Right ventricle myocardium superior (tissue), 1 donor: ENCODE measurements at regions of chr15 and their contacts with region 1.

Region 1: DNA sequence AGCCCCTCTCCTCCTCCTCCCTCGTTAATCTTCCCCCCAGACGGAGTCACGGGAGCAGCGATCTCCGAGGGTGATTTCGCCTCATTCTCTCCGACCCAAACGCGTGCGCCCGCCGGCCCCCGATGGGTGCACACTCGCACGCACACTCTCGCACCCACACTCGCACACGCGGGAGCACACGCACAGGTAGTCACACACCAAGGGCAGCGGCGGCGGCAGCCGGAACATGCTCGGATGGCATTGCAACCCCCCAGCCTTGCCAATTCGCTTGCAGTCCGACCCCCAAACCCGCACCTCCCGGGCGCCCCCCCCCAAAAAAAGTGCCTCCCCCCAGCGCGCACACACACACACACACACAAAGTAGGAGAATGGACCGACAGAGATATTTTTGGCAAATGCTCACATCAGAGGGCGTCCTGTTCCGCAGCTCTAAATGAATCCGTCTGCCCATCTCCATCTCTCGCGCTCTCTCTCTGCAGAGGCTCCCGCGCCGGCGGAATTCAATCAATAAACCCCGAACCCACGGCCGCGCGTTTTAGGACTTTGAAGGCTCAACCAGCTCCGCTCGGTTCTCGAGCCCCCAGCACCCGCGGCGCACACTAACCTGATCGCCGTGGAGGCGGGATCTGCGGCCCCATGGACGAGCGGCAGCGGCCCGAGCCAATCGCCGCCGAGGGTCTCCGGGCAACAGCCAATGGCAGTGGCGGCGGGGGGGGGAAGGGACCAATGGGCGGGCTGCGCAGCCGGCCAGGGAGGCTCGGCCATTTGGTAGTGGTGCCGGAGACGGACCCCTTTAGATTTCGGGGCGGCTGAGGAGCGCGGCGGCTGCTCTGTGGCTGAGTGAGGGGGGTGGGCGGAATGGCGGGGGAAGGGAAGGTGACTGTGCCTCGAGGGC is at the start of gene ANP32A:
- DNase-seq: peak; percentile 97
- ATAC-seq: peak; percentile 81
- total RNA-seq, gene ANP32A: 118 TPM

Region 2: DNA sequence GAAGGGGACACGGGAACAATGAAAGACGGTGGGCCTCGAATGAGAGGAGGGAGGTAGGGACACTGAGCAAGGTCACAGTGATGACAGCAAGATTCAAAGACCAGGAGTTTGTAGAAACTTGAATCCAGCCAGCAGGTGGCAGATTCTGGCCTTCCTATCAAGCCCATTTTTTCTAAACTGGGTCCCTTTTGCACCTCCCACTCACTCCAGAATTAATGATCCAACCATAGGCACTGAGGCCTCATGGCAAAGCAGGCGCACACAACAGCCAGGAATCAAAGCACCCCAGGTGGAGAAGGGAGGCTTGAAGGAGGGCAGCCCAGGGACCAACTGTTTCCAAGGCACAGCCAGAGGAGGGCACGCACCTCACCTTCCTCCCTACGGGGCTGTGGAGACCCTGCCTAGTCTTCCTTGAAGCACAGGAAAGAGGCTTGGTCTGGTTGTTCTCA is 90.0 kb before region 1 on chr15:
- intact Hi-C with region 1: loop called (anchors 10 kb)
- DNase-seq: no peak
- ATAC-seq: peak; percentile 50

Region 3: DNA sequence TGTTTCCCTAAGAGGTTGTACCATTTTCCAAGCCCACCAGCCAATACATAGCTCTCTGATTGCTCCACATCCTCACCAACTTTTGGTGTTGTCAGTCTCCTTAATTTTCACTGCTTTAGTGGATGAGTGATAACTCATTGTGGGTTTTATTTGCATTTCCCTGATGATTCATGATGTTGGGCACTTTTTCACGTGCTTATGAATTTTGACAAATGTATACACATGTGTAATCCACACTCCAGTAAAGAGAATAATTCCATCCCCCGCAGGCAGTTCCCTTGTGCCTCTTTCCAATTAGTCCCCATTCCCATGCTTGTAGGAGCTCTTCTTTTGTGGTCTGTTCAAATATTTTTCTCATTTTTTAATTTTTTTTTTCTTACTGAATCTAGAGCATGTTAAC is 52.2 kb before region 1 on chr15:
- intact Hi-C with region 1: no loop called
- DNase-seq: no peak
- ATAC-seq: no peak

Region 4: DNA sequence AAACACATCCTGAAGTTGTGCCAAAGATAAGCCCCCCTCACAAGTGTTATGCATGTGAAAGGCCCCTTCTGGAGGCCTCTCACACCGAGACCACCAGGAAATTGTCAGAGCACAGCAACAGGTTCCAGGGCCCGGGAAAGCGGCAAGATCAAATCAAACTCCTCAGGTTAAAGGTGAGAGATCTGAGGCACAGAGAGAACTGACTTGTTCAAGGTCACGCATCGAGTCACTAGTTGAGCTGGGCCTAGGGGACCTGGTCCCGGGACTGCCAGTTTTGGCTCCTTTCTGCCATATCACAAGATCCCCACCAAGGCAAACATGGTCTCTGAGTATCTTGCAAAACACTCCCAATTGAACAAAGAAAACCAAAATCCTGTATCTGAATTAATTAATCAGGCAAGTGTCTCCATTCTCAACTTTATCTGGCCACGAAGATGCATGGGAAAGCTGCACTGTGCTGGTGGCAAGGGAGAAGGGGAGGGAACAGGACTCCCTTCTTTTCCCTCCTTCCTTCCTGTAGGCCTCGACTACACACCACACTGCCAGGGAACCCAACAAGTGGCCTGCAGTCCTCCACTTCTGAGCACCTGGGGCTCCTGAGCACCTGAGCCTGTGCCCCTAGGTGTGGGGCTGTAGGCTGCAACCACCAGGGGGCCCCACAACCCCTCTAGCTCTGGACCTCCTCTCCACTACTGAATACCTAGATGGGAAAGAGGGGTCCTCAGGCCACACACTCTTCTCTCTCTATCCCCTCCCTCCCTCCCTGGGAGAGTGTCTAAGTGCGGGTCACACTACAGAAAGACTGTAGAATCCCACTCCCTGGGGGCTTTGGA is 37.1 kb before region 1 on chr15:
- intact Hi-C with region 1: loop called (anchors 5 kb)
- DNase-seq: peak; percentile 70
- ATAC-seq: peak; percentile 41

Region 5: GRCh38 chr15:68868296-68868695 is 47.8 kb after region 1 on chr15:
- intact Hi-C with region 1: no loop called
- DNase-seq: no peak
- ATAC-seq: no peak

Region 6: DNA sequence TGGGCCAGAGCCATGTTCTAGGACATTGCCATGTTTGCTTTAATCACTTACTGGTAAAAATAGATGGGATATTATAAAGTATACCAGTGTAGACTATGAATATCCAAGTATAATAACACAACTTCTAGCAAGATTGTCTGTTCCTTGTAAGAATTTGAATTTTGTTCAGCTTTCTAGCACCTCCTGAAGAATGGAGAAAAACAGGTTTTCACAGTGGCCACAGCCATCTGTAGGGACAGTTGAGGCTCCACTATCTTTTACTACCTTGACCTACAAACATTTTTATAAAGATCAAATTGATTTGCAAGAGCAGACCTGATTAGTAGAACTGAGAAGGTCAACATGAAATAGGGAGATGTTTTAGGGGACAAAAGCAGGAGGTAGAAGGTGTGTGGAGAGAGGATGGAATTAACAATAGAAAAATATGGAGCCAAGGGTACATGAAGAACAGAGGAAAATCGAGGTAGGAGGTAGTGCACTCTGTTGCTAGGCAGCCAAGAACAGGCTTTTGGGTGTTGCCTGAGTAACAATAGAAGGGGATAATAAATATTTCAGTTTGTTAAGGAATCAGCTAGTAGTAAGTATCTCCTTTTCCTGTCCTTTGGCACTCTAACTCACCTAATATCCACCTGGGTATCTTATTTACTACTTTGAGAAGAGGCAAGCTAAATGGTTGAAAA is 118.8 kb after region 1 on chr15:
- intact Hi-C with region 1: no loop called
- DNase-seq: no peak
- ATAC-seq: no peak